K562 (cell line): ENCODE measurements at regions of chr12 and their contacts with region 1.

Region 1: DNA sequence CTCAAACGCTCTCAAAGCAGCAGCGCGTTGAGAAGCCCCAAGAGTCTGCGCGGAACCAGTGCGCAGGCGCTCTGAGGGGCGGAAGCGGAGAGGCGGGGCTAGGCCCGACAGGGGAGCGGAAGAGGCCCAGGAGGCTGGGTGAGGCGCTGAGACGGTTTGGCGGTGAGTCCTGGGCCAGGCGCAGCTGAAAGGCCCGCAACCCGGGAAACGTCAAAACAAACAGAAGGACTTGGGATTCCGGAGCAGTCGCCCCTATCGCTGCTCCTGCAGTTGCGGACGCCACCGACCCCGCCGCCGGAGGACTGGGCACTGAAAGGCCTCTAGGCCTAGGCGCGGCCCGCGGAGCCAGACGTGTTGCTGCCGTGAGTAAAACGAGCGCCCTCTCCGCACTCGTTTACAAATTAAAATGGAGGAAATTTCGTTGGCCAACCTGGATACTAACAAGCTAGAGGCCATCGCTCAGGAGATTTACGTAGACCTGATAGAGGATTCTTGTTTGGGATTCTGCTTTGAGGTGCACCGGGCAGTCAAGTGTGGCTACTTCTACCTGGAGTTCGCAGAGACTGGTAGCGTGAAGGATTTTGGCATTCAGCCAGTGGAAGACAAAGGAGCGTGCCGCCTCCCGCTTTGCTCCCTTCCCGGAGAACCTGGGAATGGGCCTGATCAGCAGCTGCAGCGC is at the start of gene ATXN7L3B:
- DNase-seq: peak; percentile 93 to 95 (median 94)
- ATAC-seq: peak; percentile 97
- H3K4me3 ChIP-seq: peak within 1 kb of the TSS; percentile 69
- H3K27ac ChIP-seq: peak within 1 kb of the TSS; percentile 89
- H3K4me1 ChIP-seq: peaks cover 8 to 15% of the 10 kb centered on the region in 2 experiments; a peak in 4 of 5 replicates
- H3K27me3 ChIP-seq: no peaks in the 10 kb centered on the region
- CTCF ChIP-seq: 0 out of 6 replicates have a peak, but pooled peaks of 1 of the 3 experiments have one; percentile 2
- EP300 ChIP-seq: no peak
- POLR2A ChIP-seq: peak; percentile 89
- RAD21 ChIP-seq: no peak
- polyA plus RNA-seq, gene ATXN7L3B: 10.3 to 12.1 TPM

Region 2: GRCh38 chr12:74021937-74022336 is 515.9 kb before region 1 on chr12:
- CTCF ChIA-PET with region 1: interaction called, 3 read pairs
- POLR2A ChIA-PET with region 1: no interaction called
- in situ Hi-C with region 1: loop called (anchors 10 kb)
- intact Hi-C with region 1: no loop called
- DNase-seq: peak; percentile 39 to 74 (median 46)
- ATAC-seq: peak; percentile 100
- H3K4me3 ChIP-seq: no peak overlapping the region
- H3K27ac ChIP-seq: peak overlapping the region; percentile 61; the same call in 2 of the 3 replicates
- H3K4me1 ChIP-seq: peaks cover 0 to 5% of the 10 kb centered on the region in 2 experiments; a peak in 2 of 5 replicates
- H3K27me3 ChIP-seq: no peaks in the 10 kb centered on the region
- CTCF ChIP-seq: peak; percentile 66 to 85 (median 73)
- EP300 ChIP-seq: peak; percentile 77
- POLR2A ChIP-seq: no peak
- RAD21 ChIP-seq: peak; percentile 66 to 74

Region 3: DNA sequence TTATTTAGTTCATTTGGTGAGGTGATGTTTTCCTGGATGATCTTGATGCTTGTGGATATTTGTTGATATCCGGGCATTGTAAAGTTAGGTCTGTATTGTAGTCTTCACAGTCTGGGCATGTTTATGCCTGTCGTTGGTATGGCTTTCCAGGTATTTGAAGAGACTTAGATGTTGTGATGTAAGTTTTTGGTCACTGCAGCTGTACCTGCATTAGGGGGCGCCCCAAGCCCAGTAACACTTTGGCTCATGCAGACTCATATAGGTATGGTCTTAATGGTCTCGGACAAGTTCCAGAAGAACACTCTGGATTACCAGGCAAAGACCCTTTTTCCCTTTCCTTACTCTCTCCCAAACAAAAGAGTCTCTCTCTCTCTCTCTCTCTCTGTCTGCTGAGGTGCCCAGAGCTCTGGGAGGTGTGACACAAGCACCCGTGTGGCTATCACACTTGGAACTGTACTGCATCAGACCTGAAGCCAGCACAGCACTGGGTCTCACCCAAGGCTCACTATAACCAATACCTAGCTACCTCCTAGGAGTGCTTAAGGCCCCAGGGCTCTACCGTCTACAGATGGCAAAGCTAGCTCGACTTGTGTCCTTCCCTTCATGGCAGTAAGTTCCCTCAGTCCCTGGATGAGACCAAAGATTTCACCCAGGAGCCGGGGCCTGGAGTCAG is 426.0 kb before region 1 on chr12:
- CTCF ChIA-PET with region 1: no interaction called
- POLR2A ChIA-PET with region 1: interaction called, 3 read pairs
- in situ Hi-C with region 1: loop called (anchors 25 kb)
- intact Hi-C with region 1: loop called (anchors 1 kb)
- DNase-seq: peak in 2 of 4 experiments; percentile 7 to 67
- ATAC-seq: peak; percentile 96
- H3K4me3 ChIP-seq: no peak overlapping the region
- H3K27ac ChIP-seq: no peak overlapping the region
- H3K4me1 ChIP-seq: no peaks in the 10 kb centered on the region
- H3K27me3 ChIP-seq: no peaks in the 10 kb centered on the region
- CTCF ChIP-seq: peak; percentile 68 to 80 (median 71)
- EP300 ChIP-seq: no peak
- POLR2A ChIP-seq: no peak
- RAD21 ChIP-seq: peak; percentile 62 to 84

Region 4: GRCh38 chr12:74292351-74293194 is 245.3 kb before region 1 on chr12:
- CTCF ChIA-PET with region 1: interaction called, 3 read pairs
- POLR2A ChIA-PET with region 1: no interaction called
- in situ Hi-C with region 1: no loop called
- intact Hi-C with region 1: loop called (anchors 5 kb)
- DNase-seq: peak; percentile 57 to 95 (median 72)
- ATAC-seq: peak; percentile 93
- H3K4me3 ChIP-seq: peak overlapping the region; percentile 75
- H3K27ac ChIP-seq: peak overlapping the region; percentile 95
- H3K4me1 ChIP-seq: peaks cover 6 to 23% of the 10 kb centered on the region in 2 experiments; a peak in 4 of 5 replicates
- H3K27me3 ChIP-seq: no peaks in the 10 kb centered on the region
- CTCF ChIP-seq: no peak
- EP300 ChIP-seq: no peak
- POLR2A ChIP-seq: peak; percentile 95
- RAD21 ChIP-seq: no peak

Region 5: GRCh38 chr12:74317078-74317601 is 220.7 kb before region 1 on chr12:
- CTCF ChIA-PET with region 1: no interaction called
- POLR2A ChIA-PET with region 1: no interaction called
- in situ Hi-C with region 1: no loop called
- intact Hi-C with region 1: loop called (anchors 1 kb)
- DNase-seq: peak in 3 of 4 experiments; percentile 6 to 55 (median 39)
- ATAC-seq: peak; percentile 99
- H3K4me3 ChIP-seq: no peak overlapping the region
- H3K27ac ChIP-seq: no peak overlapping the region
- H3K4me1 ChIP-seq: no peaks in the 10 kb centered on the region
- H3K27me3 ChIP-seq: no peaks in the 10 kb centered on the region
- CTCF ChIP-seq: peak; percentile 48 to 73 (median 59); a peak in 5 of 6 replicates
- EP300 ChIP-seq: no peak
- POLR2A ChIP-seq: no peak
- RAD21 ChIP-seq: peak; percentile 78 to 90

Region 6: DNA sequence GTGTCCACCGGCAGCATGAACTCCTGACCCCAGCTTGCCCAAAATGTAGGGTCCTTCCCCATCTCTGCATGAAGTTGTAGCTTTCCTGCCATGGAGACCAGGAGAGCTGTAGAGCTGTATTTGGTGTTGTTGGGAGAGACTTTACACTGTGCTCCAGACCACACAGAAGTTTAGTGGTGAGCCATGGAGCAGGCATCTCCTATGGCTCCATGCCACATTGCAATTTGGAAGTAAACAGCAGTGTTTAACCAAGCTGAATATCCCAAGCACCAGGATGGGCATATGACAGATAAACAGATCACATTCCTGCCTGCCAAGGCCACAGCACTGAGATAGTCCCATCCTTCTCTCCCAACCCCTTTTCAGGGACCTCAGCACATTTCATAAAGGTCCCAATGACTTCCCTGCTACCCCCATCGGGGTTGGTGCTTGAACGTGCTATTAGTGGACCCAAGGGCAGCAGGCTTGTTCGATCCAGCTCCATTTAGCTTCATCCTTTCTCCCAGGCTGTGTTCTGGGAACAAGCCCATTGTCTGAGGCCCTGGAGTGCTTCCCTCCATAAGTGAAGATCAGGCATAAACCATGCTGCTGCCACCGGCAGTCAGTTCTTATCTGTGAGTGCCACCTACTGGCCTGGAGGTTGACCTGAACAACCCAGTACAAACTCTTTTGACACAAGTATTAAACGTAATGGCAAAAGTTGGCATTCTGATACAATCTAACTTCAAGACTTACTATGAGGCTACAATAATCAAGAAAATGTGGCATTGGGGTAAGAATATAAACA is 172.5 kb before region 1 on chr12:
- CTCF ChIA-PET with region 1: no interaction called
- POLR2A ChIA-PET with region 1: no interaction called
- in situ Hi-C with region 1: no loop called
- intact Hi-C with region 1: loop called (anchors 1 kb)
- DNase-seq: peak; percentile 35 to 61 (median 38)
- ATAC-seq: peak; percentile 95
- H3K4me3 ChIP-seq: no peak overlapping the region
- H3K27ac ChIP-seq: no peak overlapping the region
- H3K4me1 ChIP-seq: no peaks in the 10 kb centered on the region
- H3K27me3 ChIP-seq: no peaks in the 10 kb centered on the region
- CTCF ChIP-seq: peak; percentile 65 to 73 (median 67)
- EP300 ChIP-seq: no peak
- POLR2A ChIP-seq: no peak
- RAD21 ChIP-seq: peak; percentile 62 to 76

Region 7: GRCh38 chr12:74415633-74416032 is 122.2 kb before region 1 on chr12:
- CTCF ChIA-PET with region 1: interaction called, 4 read pairs
- POLR2A ChIA-PET with region 1: no interaction called
- in situ Hi-C with region 1: no loop called
- intact Hi-C with region 1: loop called (anchors 5 kb)
- DNase-seq: peak in 3 of 4 experiments; percentile 15 to 37 (median 29)
- ATAC-seq: peak; percentile 73
- H3K4me3 ChIP-seq: no peak overlapping the region
- H3K27ac ChIP-seq: no peak overlapping the region
- H3K4me1 ChIP-seq: no peaks in the 10 kb centered on the region
- H3K27me3 ChIP-seq: no peaks in the 10 kb centered on the region
- CTCF ChIP-seq: peak; percentile 42 to 49 (median 46); a peak in 5 of 6 replicates
- EP300 ChIP-seq: no peak
- POLR2A ChIP-seq: no peak
- RAD21 ChIP-seq: peak; percentile 38 to 64; a peak in 3 of 4 replicates

Region 8: DNA sequence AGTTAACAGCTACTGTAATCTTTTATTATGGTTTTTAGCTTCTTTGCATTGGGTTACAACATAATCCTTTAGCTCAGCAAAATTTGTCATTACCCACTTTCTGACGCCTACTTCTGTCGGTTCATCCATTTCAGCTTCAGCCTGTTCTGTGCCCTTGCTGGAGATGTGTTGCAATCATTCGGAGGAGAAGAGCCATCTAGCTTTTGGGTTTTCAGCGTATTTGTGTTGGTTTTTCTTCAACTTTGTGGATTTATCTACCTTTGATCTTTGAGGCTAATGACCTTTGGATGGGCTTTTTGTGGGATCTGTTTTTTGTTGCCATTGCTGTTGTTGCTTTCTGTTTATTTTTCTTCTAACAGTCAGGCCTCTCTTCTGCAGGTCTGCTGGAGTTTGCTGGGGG is 69.4 kb before region 1 on chr12:
- CTCF ChIA-PET with region 1: no interaction called
- POLR2A ChIA-PET with region 1: no interaction called
- in situ Hi-C with region 1: no loop called
- intact Hi-C with region 1: no loop called
- DNase-seq: no peak
- ATAC-seq: no peak
- H3K4me3 ChIP-seq: no peak overlapping the region
- H3K27ac ChIP-seq: no peak overlapping the region
- H3K4me1 ChIP-seq: no peaks in the 10 kb centered on the region
- H3K27me3 ChIP-seq: no peaks in the 10 kb centered on the region
- CTCF ChIP-seq: no peak
- EP300 ChIP-seq: no peak
- POLR2A ChIP-seq: no peak
- RAD21 ChIP-seq: no peak